ENCODE measurements at regions of chr3 and their contacts with region 1.

Region 1: DNA sequence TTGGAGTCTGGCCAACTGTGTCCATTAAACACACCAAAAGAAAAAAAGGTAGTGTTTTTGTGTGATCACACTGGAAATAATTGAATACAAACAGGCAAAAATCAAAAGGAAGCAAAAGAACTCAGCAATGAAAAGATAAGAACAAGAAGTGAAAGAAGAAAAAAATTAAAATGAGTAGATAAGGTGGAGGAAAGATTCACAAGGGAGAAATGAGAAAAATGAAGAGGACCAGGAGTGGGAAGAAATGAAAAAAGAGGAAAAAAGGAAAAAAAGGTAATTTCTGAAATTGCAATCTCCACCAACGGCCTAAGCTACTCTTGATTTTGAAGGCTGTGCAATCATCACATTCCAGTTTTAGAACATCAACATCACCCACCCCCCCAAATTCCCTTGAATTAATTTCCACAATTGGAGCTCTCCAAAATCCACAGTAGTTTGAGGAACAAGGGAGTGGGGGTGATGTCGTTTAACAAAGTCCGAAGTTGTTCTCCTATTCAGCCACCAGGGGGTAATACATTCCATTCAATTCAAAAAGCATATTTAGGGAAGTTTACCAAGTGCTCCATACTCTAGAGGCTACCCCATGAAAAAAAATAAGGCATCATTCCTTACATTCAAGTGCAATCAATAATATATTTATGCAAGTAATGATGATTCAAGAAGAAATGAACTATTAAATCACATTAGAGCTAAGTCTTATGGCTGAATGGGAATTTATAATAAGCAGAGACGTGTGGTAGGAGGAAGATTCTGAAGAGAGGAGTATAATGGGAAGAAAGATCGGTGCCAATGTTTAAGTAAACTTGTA is 37.4 kb downstream of the ZNF860 start:
- H3K4me3 ChIP-seq: no peak overlapping the region
- H3K27ac ChIP-seq: no peak overlapping the region
- H3K4me1 ChIP-seq: 0 out of 2 replicates have a peak, but pooled peaks cover 2% of the 10 kb centered on the region
- CTCF ChIP-seq: no peak

Region 2: GRCh38 chr3:31622636-31623288 is 396.2 kb before region 1 on chr3:
- CTCF ChIA-PET with region 1: no interaction called
- POLR2A ChIA-PET with region 1: no interaction called
- H3K4me3 ChIP-seq: no peak overlapping the region
- H3K27ac ChIP-seq: no peak overlapping the region
- H3K4me1 ChIP-seq: no peaks in the 10 kb centered on the region
- CTCF ChIP-seq: no peak

Region 3: DNA sequence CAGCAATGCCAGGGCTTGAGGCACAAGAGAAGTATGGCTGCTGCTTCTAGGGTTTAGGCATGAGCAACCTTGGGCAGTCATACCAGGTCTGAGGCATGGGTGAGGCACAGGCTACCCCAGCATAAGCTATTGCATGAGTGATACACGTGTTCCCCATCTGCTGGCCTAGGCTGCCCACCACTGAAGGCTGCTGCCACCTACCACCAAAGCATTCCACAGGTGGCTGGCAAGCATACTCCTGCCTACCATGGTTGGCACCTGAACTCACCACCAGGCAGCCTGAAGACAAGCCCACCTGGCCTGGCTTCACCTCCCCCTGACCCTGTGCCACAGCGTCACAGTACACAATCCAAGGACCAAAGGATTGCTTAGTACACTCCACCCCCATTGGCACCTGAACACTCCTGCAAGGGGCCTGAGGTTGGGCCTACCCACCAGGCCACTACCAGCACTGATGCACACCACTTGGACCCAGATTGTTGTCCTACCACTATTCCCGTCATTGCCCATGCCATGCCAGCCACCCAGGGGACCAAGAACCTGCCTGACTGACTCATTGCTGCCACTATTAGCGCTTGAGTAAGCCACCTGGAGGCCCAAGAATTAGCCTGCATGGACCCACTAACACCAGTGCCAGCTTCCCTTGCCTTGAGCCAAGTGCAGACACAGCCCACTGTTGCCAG is 370.5 kb before region 1 on chr3:
- CTCF ChIA-PET with region 1: no interaction called
- POLR2A ChIA-PET with region 1: no interaction called
- H3K4me3 ChIP-seq: no peak overlapping the region
- H3K27ac ChIP-seq: no peak overlapping the region
- H3K4me1 ChIP-seq: no peaks in the 10 kb centered on the region
- CTCF ChIP-seq: no peak

Region 4: DNA sequence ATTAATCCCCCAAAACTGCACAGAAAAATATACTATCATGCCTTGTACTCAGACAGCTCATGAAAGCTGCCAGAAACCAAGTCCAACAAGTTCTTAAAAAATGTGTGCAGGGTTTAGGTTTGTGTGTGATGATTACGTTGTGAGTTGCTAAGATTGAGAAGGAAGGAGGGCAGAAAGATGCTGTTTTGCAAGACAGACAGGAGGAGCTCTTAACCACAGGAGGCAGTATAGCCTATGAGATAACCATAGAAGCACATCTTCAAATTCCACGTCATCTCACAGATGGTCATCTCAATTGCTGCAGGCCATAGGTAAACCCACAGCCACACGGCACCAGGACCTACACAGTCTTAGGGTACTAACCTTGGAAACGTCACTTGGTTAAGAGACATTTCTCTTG is 294.3 kb before region 1 on chr3:
- CTCF ChIA-PET with region 1: no interaction called
- POLR2A ChIA-PET with region 1: no interaction called
- H3K4me3 ChIP-seq: no peak overlapping the region
- H3K27ac ChIP-seq: no peak overlapping the region
- H3K4me1 ChIP-seq: no peaks in the 10 kb centered on the region
- CTCF ChIP-seq: no peak

Region 5: DNA sequence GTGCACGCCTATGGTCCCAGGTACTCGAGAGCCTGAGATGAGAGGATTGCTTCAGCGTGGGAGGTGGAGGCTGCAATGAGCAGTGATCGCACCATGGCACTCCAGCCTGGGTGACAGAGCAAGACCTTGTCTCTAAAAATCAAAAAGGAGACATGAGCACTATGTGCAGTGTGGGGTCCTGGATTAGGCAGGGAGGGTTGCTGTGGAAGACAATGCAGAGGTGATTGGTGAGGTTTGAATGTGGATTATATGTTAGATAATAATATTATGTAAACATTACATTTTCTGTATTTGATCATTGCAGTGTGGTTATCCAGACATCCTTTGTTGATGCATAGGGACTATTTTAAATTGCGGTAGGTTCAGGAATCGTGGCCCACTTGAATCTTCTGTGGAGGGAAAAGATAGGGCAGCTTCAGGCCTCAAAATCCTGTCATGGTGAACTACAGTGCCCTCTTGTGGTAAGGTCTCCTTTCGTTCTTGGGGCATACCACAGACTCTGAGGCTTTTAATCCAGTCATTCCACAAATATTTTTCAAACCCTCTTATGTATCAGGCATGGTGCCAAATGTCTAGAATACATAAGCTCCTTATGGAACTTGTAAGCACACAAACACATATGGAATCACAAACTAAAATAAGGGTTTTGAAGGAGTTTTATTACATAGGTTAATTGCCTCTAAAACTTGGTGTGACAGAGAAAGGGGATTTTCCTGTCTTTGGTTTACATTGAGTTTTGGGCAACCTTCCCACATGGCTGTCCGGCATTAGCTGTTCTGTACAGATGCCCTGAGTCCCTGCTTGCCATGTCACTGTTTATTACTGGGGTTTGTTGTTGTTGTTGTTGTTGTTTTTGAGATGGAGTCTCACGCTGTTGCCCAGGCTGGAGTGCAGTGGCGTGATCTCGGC is 125.1 kb after region 1 on chr3:
- CTCF ChIA-PET with region 1: interaction called, 23 read pairs
- POLR2A ChIA-PET with region 1: no interaction called
- H3K4me3 ChIP-seq: no peak overlapping the region
- H3K27ac ChIP-seq: no peak overlapping the region
- H3K4me1 ChIP-seq: no peaks in the 10 kb centered on the region
- CTCF ChIP-seq: 0 out of 2 replicates have a peak, but pooled peaks have one; percentile 26

Region 6: DNA sequence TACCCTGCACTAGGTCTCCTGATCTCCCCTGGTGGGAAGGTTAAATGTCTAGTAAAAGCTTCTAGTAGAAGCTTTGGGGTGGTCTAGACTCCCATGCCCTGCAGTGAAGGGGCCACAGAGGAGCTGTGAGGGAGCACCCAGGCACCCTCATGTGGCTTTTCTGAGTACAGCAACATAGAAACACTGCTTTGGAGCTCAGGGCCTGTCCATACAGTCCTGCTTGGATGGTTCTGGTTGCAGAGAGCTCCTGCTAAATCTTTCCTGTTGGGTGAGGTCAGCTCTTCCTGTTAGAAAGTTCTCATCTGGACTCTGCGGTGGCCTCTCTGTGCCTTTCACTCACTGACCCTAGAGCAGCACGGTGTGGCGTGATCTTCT is 135.2 kb after region 1 on chr3:
- CTCF ChIA-PET with region 1: interaction called, 19 read pairs
- POLR2A ChIA-PET with region 1: no interaction called
- H3K4me3 ChIP-seq: no peak overlapping the region
- H3K27ac ChIP-seq: no peak overlapping the region
- H3K4me1 ChIP-seq: no peaks in the 10 kb centered on the region
- CTCF ChIP-seq: no peak

Region 7: GRCh38 chr3:32467333-32468070 is 448.5 kb after region 1 on chr3:
- CTCF ChIA-PET with region 1: no interaction called
- POLR2A ChIA-PET with region 1: no interaction called
- H3K4me3 ChIP-seq: no peak overlapping the region
- H3K27ac ChIP-seq: no peak overlapping the region
- H3K4me1 ChIP-seq: no peaks in the 10 kb centered on the region; the same call in 1 of the 2 replicates
- CTCF ChIP-seq: peak; percentile 77; the same call in 1 of the 2 replicates

Measured in HEK293 (cell line).